ENCODE measurements at regions of chr15 and their contacts with region 1.

Region 1: GRCh38 chr15:35545824-35546510 is at the start of gene DPH6:
- DNase-seq: peak; percentile 92
- ATAC-seq: peak; percentile 96
- total RNA-seq, gene DPH6: 17.6 TPM

Region 2: GRCh38 chr15:35466476-35466875 is 79.5 kb before region 1 on chr15:
- intact Hi-C with region 1: no loop called
- DNase-seq: no peak
- ATAC-seq: no peak

Region 3: GRCh38 chr15:35697549-35698299 is 151.8 kb after region 1 on chr15:
- intact Hi-C with region 1: loop called (anchors 10 kb)
- DNase-seq: no peak
- ATAC-seq: peak; percentile 79

Region 4: GRCh38 chr15:35757765-35758164 is 211.8 kb after region 1 on chr15:
- intact Hi-C with region 1: no loop called
- DNase-seq: no peak
- ATAC-seq: no peak

Region 5: GRCh38 chr15:35929740-35930444 is 383.9 kb after region 1 on chr15:
- intact Hi-C with region 1: no loop called
- DNase-seq: no peak
- ATAC-seq: no peak